HepG2 (cell line): ENCODE measurements at regions of chr13 and their contacts with region 1.

Region 1: DNA sequence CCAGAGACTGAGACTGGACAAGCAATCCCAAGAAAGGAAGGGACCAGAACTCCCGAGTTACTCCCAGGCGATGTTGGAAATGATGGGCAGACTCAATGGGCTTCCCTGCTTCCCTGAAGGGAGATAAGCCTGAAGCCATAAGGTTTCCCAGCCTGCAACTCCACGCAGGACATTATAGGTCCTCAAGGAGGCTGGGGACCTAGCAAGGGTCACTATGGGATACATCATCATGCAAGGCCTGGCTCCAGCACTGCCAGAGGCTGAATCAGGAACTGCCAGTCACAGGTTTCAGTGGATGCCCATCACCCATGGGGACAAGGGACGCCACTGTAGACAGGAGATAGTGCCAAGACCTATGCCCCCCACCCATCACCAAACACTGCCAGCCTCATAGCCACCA is 338.7 kb downstream of the IRS2 start:
- DNase-seq: no peak
- ATAC-seq: no peak
- H3K4me3 ChIP-seq: no peak overlapping the region
- H3K27ac ChIP-seq: no peak overlapping the region
- H3K4me1 ChIP-seq: no peaks in the 10 kb centered on the region
- H3K27me3 ChIP-seq: no peaks in the 10 kb centered on the region
- CTCF ChIP-seq: no peak
- EP300 ChIP-seq: no peak
- POLR2A ChIP-seq: no peak
- RAD21 ChIP-seq: no peak

Region 2: GRCh38 chr13:108477376-108477775 is 970.3 kb before region 1 on chr13:
- CTCF ChIA-PET with region 1: no interaction called
- POLR2A ChIA-PET with region 1: no interaction called
- in situ Hi-C with region 1: no loop called
- intact Hi-C with region 1: no loop called
- DNase-seq: no peak
- ATAC-seq: no peak
- H3K4me3 ChIP-seq: no peak overlapping the region
- H3K27ac ChIP-seq: no peak overlapping the region
- H3K4me1 ChIP-seq: no peaks in the 10 kb centered on the region
- H3K27me3 ChIP-seq: no peaks in the 10 kb centered on the region; a peak in 1 of 5 replicates
- CTCF ChIP-seq: no peak
- EP300 ChIP-seq: no peak
- POLR2A ChIP-seq: no peak
- RAD21 ChIP-seq: no peak

Region 3: GRCh38 chr13:109479991-109480691 is 32.5 kb after region 1 on chr13:
- CTCF ChIA-PET with region 1: no interaction called
- POLR2A ChIA-PET with region 1: no interaction called
- in situ Hi-C with region 1: no loop called
- intact Hi-C with region 1: no loop called
- DNase-seq: no peak
- ATAC-seq: no peak
- H3K4me3 ChIP-seq: no peak overlapping the region
- H3K27ac ChIP-seq: no peak overlapping the region
- H3K4me1 ChIP-seq: no peaks in the 10 kb centered on the region
- H3K27me3 ChIP-seq: peaks cover 0 to 3% of the 10 kb centered on the region in 2 experiments; a peak in 1 of 5 replicates
- CTCF ChIP-seq: no peak
- EP300 ChIP-seq: no peak
- POLR2A ChIP-seq: no peak
- RAD21 ChIP-seq: no peak

Region 4: DNA sequence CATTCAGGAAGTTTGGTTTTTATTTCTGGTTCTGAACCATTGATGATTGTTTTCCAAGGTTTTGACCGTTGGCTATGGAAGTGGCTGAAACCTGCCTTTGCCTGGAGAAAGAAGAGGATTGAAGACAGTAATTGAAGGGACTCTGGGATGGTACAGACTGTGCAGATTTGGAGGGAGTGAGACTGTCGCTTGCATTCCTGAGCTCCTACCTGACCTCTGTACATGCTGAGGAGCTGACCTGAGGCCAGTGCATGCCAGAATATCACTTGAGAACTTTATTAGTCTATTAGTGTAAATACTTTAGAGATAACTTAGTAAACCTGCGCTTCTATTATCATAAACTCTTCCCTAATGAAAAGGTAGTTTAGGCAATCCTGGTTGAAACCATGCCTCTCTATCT is 62.3 kb after region 1 on chr13:
- CTCF ChIA-PET with region 1: no interaction called
- POLR2A ChIA-PET with region 1: no interaction called
- in situ Hi-C with region 1: no loop called
- intact Hi-C with region 1: loop called (anchors 2 kb)
- DNase-seq: no peak
- ATAC-seq: no peak
- H3K4me3 ChIP-seq: no peak overlapping the region
- H3K27ac ChIP-seq: no peak overlapping the region
- H3K4me1 ChIP-seq: no peaks in the 10 kb centered on the region
- H3K27me3 ChIP-seq: no peaks in the 10 kb centered on the region
- CTCF ChIP-seq: no peak
- EP300 ChIP-seq: no peak
- POLR2A ChIP-seq: no peak
- RAD21 ChIP-seq: no peak